Colonic mucosa (tissue), 4 donors: ENCODE measurements at regions of chr14 and their contacts with region 1.

Region 1: DNA sequence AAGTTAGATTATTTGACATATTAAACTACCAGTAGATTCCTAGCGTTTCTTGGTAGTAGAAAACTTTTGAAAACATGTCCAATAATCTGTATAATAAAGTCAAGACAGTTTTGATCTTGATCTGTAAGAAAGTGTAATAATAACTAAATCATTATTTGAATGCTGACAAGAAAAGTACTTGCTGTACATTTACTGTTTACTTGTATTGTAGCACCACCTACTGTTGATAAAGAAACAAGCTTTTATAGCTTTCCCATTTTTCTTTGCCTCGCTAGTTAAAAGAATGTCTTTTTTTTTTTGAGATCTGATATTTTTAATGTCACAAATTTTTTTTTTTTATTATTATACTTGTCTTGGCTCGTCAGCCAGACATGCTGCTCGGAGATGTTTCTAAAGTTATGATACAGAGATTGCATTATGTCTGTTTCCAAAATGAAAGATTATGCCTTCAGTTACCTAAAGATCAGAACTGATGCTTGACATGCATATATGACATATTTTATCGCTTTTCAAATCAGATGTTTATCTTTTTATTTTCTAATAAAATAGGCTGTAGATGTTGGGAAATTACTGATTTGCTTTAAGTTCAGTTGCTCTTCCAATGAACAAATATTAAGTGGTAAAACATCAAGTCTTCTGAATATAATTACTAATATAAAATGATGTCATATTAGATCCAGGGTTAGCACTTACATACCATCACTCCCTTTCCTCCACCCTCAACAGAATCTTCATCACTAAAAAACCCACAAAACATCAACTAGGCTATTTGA is 140.5 kb downstream of the AKAP6 start:
- DNase-seq: no peak
- H3K4me3 ChIP-seq: no peak overlapping the region
- H3K27ac ChIP-seq: no peak overlapping the region
- H3K4me1 ChIP-seq: no peaks in the 10 kb centered on the region
- H3K27me3 ChIP-seq: no peaks in the 10 kb centered on the region
- CTCF ChIP-seq: peak; percentile 34

Region 2: DNA sequence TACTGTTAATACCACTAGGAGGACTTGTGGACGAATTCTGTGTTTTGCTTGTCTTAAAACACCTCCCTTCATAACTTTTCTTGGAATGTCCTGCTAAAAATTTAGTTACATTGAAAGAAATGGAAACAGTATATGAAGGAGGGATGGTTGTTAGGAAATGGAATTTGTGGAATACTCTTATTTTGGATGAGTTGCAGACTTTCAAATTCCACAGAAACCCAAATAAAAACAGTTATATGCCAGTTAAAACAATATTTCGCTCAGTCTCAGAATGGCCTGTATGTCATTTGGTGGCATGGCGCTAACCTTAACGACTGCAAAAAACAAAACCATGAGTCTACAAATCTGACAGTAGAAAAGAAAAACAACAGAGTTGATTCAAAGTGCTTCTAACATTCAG is 404.6 kb before region 1 on chr14:
- intact Hi-C with region 1: loop called (anchors 5 kb)
- DNase-seq: no peak
- H3K4me3 ChIP-seq: no peak overlapping the region
- H3K27ac ChIP-seq: no peak overlapping the region
- H3K4me1 ChIP-seq: no peaks in the 10 kb centered on the region
- H3K27me3 ChIP-seq: no peaks in the 10 kb centered on the region
- CTCF ChIP-seq: no peak